ENCODE measurements at regions of chr4 and their contacts with region 1.

Region 1: GRCh38 chr4:22614114-22614513 is 78.6 kb upstream of the GBA3 start:
- DNase-seq: no peak
- ATAC-seq: no peak
- H3K4me3 ChIP-seq: no peak overlapping the region
- H3K27ac ChIP-seq: no peak overlapping the region
- H3K4me1 ChIP-seq: no peaks in the 10 kb centered on the region
- H3K27me3 ChIP-seq: no peaks in the 10 kb centered on the region
- CTCF ChIP-seq: no peak
- POLR2A ChIP-seq: no peak
- RAD21 ChIP-seq: no peak

Region 2: DNA sequence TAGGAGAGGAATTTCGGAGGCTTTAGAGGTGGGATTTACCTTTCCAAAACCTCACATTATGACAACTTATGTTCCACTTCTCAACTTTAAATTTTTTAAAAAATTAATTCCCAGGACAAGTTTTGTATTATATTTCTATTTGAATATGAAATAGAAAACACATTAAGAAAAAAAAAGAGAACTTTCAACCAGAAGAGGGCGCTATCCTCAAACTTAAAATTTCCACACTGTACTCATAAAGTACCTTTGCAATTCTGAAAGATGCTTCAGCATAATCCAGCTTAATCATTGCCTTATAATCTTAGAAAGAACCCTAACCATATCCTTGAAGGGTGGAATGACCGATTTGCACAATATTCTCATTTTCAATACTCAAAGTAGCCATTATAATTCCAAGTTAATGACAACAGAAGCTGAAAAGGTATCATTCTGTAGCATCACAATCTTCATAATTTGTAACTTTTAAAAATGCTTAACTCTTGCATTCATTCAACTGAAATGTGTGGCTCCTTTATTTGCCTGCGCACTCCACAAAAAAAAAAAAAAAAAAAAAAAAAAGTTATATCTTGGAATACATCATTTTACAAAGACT is 823.6 kb before region 1 on chr4:
- CTCF ChIA-PET with region 1: no interaction called
- POLR2A ChIA-PET with region 1: no interaction called
- RAD21 ChIA-PET with region 1: no interaction called
- intact Hi-C with region 1: loop called (anchors 10 kb)
- DNase-seq: peak; percentile 16
- ATAC-seq: no peak
- H3K4me3 ChIP-seq: no peak overlapping the region
- H3K27ac ChIP-seq: no peak overlapping the region
- H3K4me1 ChIP-seq: no peaks in the 10 kb centered on the region
- H3K27me3 ChIP-seq: no peaks in the 10 kb centered on the region
- CTCF ChIP-seq: peak; percentile 22 to 64 (median 40); a peak in 4 of 6 replicates
- POLR2A ChIP-seq: no peak
- RAD21 ChIP-seq: peak; percentile 57